Activated naive CD4-positive, alpha-beta T cell treated with anti-CD3 and anti-CD28 coated beads for 36 hours (primary cell): ENCODE measurements at regions of chr3 and their contacts with region 1.

Region 1: DNA sequence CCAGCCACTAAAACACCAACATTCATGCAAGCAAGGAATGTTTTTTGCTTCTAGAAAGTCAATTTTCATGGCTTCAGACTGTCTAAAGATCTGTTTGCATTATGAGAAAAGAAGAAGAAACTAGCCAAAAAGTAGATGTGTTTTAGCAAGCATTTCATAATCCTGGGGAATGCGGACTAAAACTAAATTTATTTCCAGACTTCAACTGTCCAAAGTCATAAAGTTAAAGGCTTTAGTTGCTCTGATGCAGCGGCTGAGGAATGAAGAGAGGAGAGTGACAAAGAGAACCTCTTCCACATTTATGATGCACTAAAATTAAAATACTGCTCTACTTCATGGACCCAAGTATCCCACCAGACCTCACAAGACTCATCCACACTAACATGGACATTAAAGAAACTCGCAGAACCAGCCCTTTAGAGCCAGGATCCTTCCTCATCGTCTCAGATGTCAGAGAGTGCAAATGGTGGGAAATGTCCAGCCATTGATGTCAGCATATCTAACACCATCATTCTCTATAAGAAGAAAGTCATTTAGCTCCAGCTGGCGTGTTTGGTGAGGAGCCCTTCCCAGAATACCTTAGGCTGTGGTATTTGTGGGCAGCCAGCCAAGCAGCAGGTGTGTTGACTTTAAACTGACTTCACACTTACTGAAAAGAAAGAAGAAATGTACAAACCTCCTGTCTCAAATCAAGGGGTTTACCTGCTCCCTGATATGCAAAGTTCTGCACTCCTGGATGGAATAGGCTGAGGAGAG is 17.4 kb downstream of the FYCO1 start:
- DNase-seq: peak; percentile 89
- H3K4me3 Mint-ChIP-seq: no peak overlapping the region
- H3K27ac Mint-ChIP-seq: peak overlapping the region; percentile 80
- H3K4me1 Mint-ChIP-seq: peaks cover 65% of the 10 kb centered on the region
- H3K27me3 Mint-ChIP-seq: no peaks in the 10 kb centered on the region

Region 2: GRCh38 chr3:45864760-45865519 is 113.2 kb before region 1 on chr3:
- CTCF ChIA-PET with region 1: no interaction called
- intact Hi-C with region 1: loop called (anchors 2 kb)
- DNase-seq: peak; percentile 48
- H3K4me3 Mint-ChIP-seq: no peak overlapping the region
- H3K27ac Mint-ChIP-seq: no peak overlapping the region
- H3K4me1 Mint-ChIP-seq: peaks cover 44% of the 10 kb centered on the region
- H3K27me3 Mint-ChIP-seq: peaks cover 53% of the 10 kb centered on the region

Region 3: GRCh38 chr3:45938864-45939263 is 39.3 kb before region 1 on chr3:
- CTCF ChIA-PET with region 1: interaction called, 5 read pairs
- intact Hi-C with region 1: loop called (anchors 1 kb)
- DNase-seq: peak; percentile 94
- H3K4me3 Mint-ChIP-seq: no peak overlapping the region
- H3K27ac Mint-ChIP-seq: no peak overlapping the region
- H3K4me1 Mint-ChIP-seq: peaks cover 25% of the 10 kb centered on the region
- H3K27me3 Mint-ChIP-seq: peaks cover 3% of the 10 kb centered on the region

Region 4: DNA sequence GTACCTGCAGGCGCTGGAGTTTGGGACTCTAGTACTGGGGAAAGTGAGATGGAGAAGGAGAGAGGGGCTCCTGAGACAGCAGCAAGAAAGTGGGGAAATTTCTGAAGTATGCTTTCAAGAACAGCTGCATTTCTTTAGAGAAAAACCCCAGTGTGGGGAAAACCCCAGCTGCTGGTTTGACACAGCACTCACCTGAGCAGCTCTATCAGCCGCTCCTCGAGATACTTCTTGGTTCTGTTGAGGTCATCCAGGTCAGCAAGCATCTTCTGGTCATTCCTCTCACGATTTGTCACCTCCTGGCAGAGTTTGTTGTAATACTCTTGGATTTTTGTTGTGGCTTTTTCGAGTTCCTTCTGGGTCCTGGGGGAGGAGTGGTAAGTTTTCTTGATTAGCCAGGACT is 16.2 kb before region 1 on chr3:
- CTCF ChIA-PET with region 1: no interaction called
- intact Hi-C with region 1: loop called (anchors 1 kb)
- DNase-seq: peak; percentile 75
- H3K4me3 Mint-ChIP-seq: no peak overlapping the region
- H3K27ac Mint-ChIP-seq: no peak overlapping the region
- H3K4me1 Mint-ChIP-seq: peaks cover 52% of the 10 kb centered on the region
- H3K27me3 Mint-ChIP-seq: no peaks in the 10 kb centered on the region

Region 5: GRCh38 chr3:45995236-45996192 is 17.3 kb after region 1 on chr3 and contains the start of gene FYCO1:
- CTCF ChIA-PET with region 1: no interaction called
- intact Hi-C with region 1: loop called (anchors 1 kb)
- DNase-seq: peak; percentile 94
- H3K4me3 Mint-ChIP-seq: peak within 1 kb of the TSS; percentile 82
- H3K27ac Mint-ChIP-seq: peak within 1 kb of the TSS; percentile 81
- H3K4me1 Mint-ChIP-seq: peaks cover 31% of the 10 kb centered on the region
- H3K27me3 Mint-ChIP-seq: peaks cover 3% of the 10 kb centered on the region
- total RNA-seq, gene FYCO1: 10.2 to 10.5 TPM

Region 6: GRCh38 chr3:46065294-46065721 is 87.1 kb after region 1 on chr3:
- CTCF ChIA-PET with region 1: interaction called, 4 read pairs
- intact Hi-C with region 1: loop called (anchors 1 kb)
- DNase-seq: peak; percentile 89
- H3K4me3 Mint-ChIP-seq: no peak overlapping the region
- H3K27ac Mint-ChIP-seq: no peak overlapping the region
- H3K4me1 Mint-ChIP-seq: peaks cover 67% of the 10 kb centered on the region
- H3K27me3 Mint-ChIP-seq: peaks cover 49% of the 10 kb centered on the region

Region 7: GRCh38 chr3:46098319-46098761 is 120.2 kb after region 1 on chr3:
- CTCF ChIA-PET with region 1: no interaction called
- intact Hi-C with region 1: loop called (anchors 1 kb)
- DNase-seq: peak; percentile 69
- H3K4me3 Mint-ChIP-seq: no peak overlapping the region
- H3K27ac Mint-ChIP-seq: peak overlapping the region; percentile 76
- H3K4me1 Mint-ChIP-seq: peaks cover 31% of the 10 kb centered on the region
- H3K27me3 Mint-ChIP-seq: peaks cover 20% of the 10 kb centered on the region

Region 8: DNA sequence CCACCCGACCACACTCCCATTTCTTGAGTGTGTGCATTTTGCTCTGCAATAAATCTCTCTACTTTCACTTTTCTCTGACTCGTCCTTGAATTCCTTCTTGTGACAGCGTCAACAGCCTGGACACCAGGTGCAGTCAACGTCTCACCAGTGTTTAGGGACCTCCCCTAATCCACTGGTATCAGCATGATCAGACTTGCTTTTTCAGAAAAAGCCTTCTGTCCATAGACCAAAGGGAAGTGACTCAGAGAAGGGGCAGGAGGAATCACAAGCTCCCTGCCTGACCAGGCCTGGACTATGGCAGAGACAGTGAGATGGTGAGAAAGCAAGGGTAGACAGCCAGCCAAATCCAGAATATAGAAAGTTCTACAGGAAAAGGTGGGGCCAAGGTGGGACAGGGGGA is 408.0 kb after region 1 on chr3:
- CTCF ChIA-PET with region 1: no interaction called
- intact Hi-C with region 1: no loop called
- DNase-seq: no peak
- H3K4me3 Mint-ChIP-seq: no peak overlapping the region
- H3K27ac Mint-ChIP-seq: no peak overlapping the region
- H3K4me1 Mint-ChIP-seq: peaks cover 6% of the 10 kb centered on the region
- H3K27me3 Mint-ChIP-seq: no peaks in the 10 kb centered on the region